Pancreas (tissue), 10 donors: ENCODE measurements at regions of chr16 and their contacts with region 1.

Region 1: GRCh38 chr16:49806446-49806845 is 49.5 kb downstream of the ZNF423 start:
- DNase-seq: no peak
- ATAC-seq: no peak
- H3K4me3 ChIP-seq: no peak overlapping the region
- H3K27ac ChIP-seq: no peak overlapping the region
- H3K4me1 ChIP-seq: no peaks in the 10 kb centered on the region
- H3K27me3 ChIP-seq: no peaks in the 10 kb centered on the region
- CTCF ChIP-seq: no peak

Region 2: GRCh38 chr16:49833085-49833484 is 26.6 kb after region 1 on chr16:
- intact Hi-C with region 1: no loop called
- DNase-seq: peak in 1 of 6 donors; percentile 40
- ATAC-seq: peak in 3 of 4 donors; percentile 22 to 36 (median 26)
- H3K4me3 ChIP-seq: no peak overlapping the region
- H3K27ac ChIP-seq: peak overlapping the region in 1 of 4 donors; percentile 5
- H3K4me1 ChIP-seq: no peaks in the 10 kb centered on the region
- H3K27me3 ChIP-seq: no peaks in the 10 kb centered on the region
- CTCF ChIP-seq: no peak

Region 3: GRCh38 chr16:49947907-49948650 is 141.6 kb after region 1 on chr16:
- intact Hi-C with region 1: loop called in 1 of 3 experiments (anchors 5 kb)
- DNase-seq: no peak
- ATAC-seq: no peak
- H3K4me3 ChIP-seq: no peak overlapping the region
- H3K27ac ChIP-seq: no peak overlapping the region
- H3K4me1 ChIP-seq: no peaks in the 10 kb centered on the region
- H3K27me3 ChIP-seq: no peaks in the 10 kb centered on the region
- CTCF ChIP-seq: no peak

Region 4: GRCh38 chr16:49969091-49970030 is 162.9 kb after region 1 on chr16:
- intact Hi-C with region 1: no loop called
- DNase-seq: no peak
- ATAC-seq: no peak
- H3K4me3 ChIP-seq: no peak overlapping the region
- H3K27ac ChIP-seq: no peak overlapping the region
- H3K4me1 ChIP-seq: no peaks in the 10 kb centered on the region
- H3K27me3 ChIP-seq: peaks cover 0 to 11% (median 1%) of the 10 kb centered on the region in 4 donors
- CTCF ChIP-seq: no peak